Naive thymus-derived CD4-positive, alpha-beta T cell (primary cell): ENCODE measurements at regions of chr18 and their contacts with region 1.

Region 1: DNA sequence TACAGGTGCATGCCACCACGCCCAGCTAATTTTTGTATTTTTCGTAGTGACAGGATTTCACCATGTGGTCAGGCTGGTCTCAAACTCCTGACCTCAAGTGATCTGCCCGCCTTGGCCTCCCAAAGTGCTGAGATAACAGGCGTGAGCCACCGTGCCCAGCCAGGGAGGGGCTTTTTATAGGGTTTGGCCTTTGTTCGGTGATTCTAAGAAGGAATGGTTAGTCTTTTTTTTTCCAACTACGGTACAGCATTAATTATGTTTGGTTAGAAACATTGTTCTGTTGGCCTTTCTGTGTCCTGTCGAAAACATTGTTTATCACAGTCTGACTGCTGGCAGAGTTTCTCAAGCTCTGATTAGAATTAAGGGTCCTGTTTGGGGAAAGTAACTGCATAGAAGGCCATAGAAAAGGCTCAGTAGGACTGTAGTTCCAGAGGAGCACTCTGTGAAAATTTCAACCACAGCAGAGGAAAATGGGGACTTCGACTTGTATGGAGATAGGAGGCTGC is 19.3 kb upstream of the SMCHD1 start:
- DNase-seq: no peak
- ATAC-seq: peak; percentile 47
- H3K4me3 ChIP-seq: peak overlapping the region; percentile 46
- H3K4me3 Mint-ChIP-seq: peak overlapping the region in 9 of 10 donors; percentile 68 to 93 (median 86)
- H3K27ac ChIP-seq: peak overlapping the region; percentile 83
- H3K27ac Mint-ChIP-seq: peak overlapping the region in 6 of 9 donors; percentile 98 to 100 (median 100)
- H3K4me1 ChIP-seq: peaks cover 65 to 74% of the 10 kb centered on the region in 2 donors
- H3K4me1 Mint-ChIP-seq: peaks cover 0 to 100% (median 79%) of the 10 kb centered on the region in 7 donors
- H3K27me3 ChIP-seq: no peaks in the 10 kb centered on the region
- H3K27me3 Mint-ChIP-seq: no peaks in the 10 kb centered on the region

Region 2: DNA sequence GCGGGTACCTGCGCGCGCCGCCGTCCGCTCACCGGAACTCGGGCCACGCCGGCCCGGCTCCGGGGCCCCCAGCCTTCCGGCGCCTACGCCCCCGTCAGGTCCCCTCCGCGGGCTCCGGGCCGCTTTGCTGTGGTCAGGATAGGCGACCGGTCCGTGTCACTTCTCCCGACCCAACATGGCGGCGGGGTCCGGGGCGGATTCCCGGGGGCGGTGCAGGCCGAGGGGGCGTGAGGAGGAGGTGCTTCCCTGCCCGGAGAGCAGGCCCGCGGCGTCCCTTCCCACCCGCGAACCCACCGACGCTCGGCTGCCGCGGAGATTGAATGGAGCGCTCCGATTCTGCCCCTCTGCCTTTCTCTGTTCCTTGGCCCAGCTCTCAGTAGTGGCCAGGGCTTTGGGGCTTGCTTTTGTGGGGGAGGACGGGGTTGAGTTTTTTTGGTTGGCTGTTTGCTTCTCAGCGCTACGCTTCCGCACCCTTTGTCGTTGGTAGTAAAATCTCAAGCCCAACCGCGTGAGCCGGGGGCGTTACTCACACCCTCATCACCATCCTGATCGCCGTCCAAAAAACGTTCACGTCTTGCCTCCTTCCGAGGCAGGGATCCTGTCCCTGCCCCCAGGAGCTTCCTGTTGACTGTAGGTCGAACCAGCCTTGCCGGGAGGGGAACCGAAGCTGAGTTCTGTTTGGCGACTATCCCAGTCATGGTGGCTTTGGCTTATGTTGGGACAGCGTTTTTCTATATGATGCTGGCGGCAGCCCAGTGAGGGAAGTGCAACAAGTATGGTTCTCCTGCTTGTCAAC is 1823.6 kb before region 1 on chr18:
- CTCF ChIA-PET with region 1: no interaction called
- POLR2A ChIA-PET with region 1: interaction called, 3 read pairs
- intact Hi-C with region 1: loop called (anchors 1 to 10 kb)
- DNase-seq: peak; percentile 70 to 86 (median 84)
- ATAC-seq: peak; percentile 81
- H3K4me3 ChIP-seq: peak overlapping the region; percentile 60
- H3K4me3 Mint-ChIP-seq: peak overlapping the region; percentile 90 to 98 (median 95)
- H3K27ac ChIP-seq: peak overlapping the region; percentile 94
- H3K27ac Mint-ChIP-seq: peak overlapping the region; percentile 94 to 100 (median 98)
- H3K4me1 ChIP-seq: peaks cover 31 to 36% of the 10 kb centered on the region in 2 donors
- H3K4me1 Mint-ChIP-seq: peaks cover 36 to 78% (median 71%) of the 10 kb centered on the region in 7 donors
- H3K27me3 ChIP-seq: no peaks in the 10 kb centered on the region
- H3K27me3 Mint-ChIP-seq: peaks cover 0 to 6% (median 0%) of the 10 kb centered on the region in 5 donors

Region 3: DNA sequence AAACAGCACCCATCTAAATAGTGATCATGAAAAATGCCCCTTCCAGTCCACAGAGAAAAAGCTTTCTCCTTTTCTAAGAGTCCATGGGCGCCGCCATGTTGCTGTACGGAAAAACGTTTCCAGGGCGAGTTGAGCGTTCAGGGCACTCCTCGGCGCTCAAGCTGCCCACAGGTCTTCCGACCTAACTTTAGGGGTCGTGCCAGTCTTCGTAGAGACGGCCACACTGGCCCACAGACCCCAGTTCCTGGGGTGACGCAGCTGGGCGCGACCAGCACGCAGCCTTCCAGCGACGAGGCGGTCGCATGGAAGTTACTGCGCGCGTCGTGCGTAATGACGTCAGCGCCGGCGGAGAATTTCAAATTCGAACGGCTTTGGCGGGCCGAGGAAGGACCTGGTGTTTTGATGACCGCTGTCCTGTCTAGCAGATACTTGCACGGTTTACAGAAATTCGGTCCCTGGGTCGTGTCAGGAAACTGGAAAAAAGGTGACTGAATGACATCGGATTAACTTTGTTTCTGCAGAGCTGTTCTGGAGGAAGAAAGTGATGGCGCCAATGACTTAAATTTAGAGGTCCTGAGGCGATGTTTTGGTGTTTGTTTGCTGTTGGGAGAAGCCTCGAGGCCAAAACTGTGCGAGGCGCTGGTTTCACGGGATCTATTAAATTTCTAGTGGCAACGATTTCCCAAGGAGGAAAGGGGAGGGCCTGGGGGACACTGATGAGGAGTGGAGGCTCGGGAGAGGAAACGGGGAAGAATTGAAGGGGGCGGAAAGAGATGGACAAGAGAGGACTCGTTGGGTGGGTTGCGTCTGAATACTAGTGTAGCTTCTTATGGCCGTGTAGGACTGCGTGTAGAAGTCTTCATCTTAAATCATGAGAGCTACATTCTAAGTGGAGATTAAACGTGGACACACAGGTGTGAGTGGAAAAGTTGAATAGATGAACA is 64.7 kb before region 1 on chr18 and contains the starts of genes METTL4 and NDC80:
- CTCF ChIA-PET with region 1: interaction called, 3 read pairs
- POLR2A ChIA-PET with region 1: interaction called, 58 read pairs
- intact Hi-C with region 1: loop called (anchors 1 kb)
- DNase-seq: peak; percentile 70 to 90 (median 82)
- ATAC-seq: peak; percentile 87
- H3K4me3 ChIP-seq: peak within 1 kb of the TSS; percentile 88
- H3K4me3 Mint-ChIP-seq: peak within 1 kb of the TSS; percentile 96 to 100 (median 99)
- H3K27ac ChIP-seq: peak within 1 kb of the TSS; percentile 97
- H3K27ac Mint-ChIP-seq: peak within 1 kb of the TSS; percentile 98 to 100 (median 100)
- H3K4me1 ChIP-seq: peaks cover 10 to 13% of the 10 kb centered on the region in 2 donors
- H3K4me1 Mint-ChIP-seq: peaks cover 38 to 63% (median 59%) of the 10 kb centered on the region in 7 donors
- H3K27me3 ChIP-seq: no peaks in the 10 kb centered on the region
- H3K27me3 Mint-ChIP-seq: no peaks in the 10 kb centered on the region
- total RNA-seq, gene METTL4: 13.8 to 32.5 (median 22.8) TPM
- total RNA-seq, gene NDC80: 2.4 to 53.6 (median 2.7) TPM

Region 4: GRCh38 chr18:2597639-2598038 is 38.5 kb before region 1 on chr18:
- CTCF ChIA-PET with region 1: interaction called, 6 read pairs
- POLR2A ChIA-PET with region 1: interaction called, 261 read pairs
- intact Hi-C with region 1: no loop called
- DNase-seq: peak in 6 of 9 donors; percentile 33 to 59 (median 56)
- ATAC-seq: peak; percentile 69
- H3K4me3 ChIP-seq: no peak overlapping the region
- H3K4me3 Mint-ChIP-seq: peak overlapping the region in 9 of 10 donors; percentile 0 to 50 (median 25)
- H3K27ac ChIP-seq: no peak overlapping the region
- H3K27ac Mint-ChIP-seq: peak overlapping the region; percentile 36 to 83 (median 57)
- H3K4me1 ChIP-seq: peaks cover 5 to 36% of the 10 kb centered on the region in 2 donors
- H3K4me1 Mint-ChIP-seq: peaks cover 20 to 69% (median 59%) of the 10 kb centered on the region in 7 donors
- H3K27me3 ChIP-seq: no peaks in the 10 kb centered on the region
- H3K27me3 Mint-ChIP-seq: no peaks in the 10 kb centered on the region

Region 5: GRCh38 chr18:2618009-2618408 is 18.2 kb before region 1 on chr18:
- CTCF ChIA-PET with region 1: no interaction called
- POLR2A ChIA-PET with region 1: interaction called, 261 read pairs
- intact Hi-C with region 1: loop called in 1 of 2 experiments (anchors 2 kb)
- DNase-seq: no peak
- ATAC-seq: no peak
- H3K4me3 ChIP-seq: no peak overlapping the region
- H3K4me3 Mint-ChIP-seq: no peak overlapping the region
- H3K27ac ChIP-seq: no peak overlapping the region
- H3K27ac Mint-ChIP-seq: no peak overlapping the region
- H3K4me1 ChIP-seq: no peaks in the 10 kb centered on the region
- H3K4me1 Mint-ChIP-seq: peaks cover 0 to 18% (median 9%) of the 10 kb centered on the region in 7 donors
- H3K27me3 ChIP-seq: no peaks in the 10 kb centered on the region
- H3K27me3 Mint-ChIP-seq: peaks cover 0 to 2% (median 0%) of the 10 kb centered on the region in 5 donors

Region 6: GRCh38 chr18:2672410-2672809 is 36.2 kb after region 1 on chr18:
- CTCF ChIA-PET with region 1: interaction called, 4 read pairs
- POLR2A ChIA-PET with region 1: interaction called, 11 read pairs
- intact Hi-C with region 1: no loop called
- DNase-seq: no peak
- ATAC-seq: no peak
- H3K4me3 ChIP-seq: no peak overlapping the region
- H3K4me3 Mint-ChIP-seq: peak overlapping the region in 2 of 10 donors; percentile 37 to 41
- H3K27ac ChIP-seq: no peak overlapping the region
- H3K27ac Mint-ChIP-seq: peak overlapping the region in 3 of 9 donors; percentile 17 to 85 (median 71)
- H3K4me1 ChIP-seq: peaks cover 0 to 10% of the 10 kb centered on the region in 2 donors
- H3K4me1 Mint-ChIP-seq: peaks cover 35 to 84% (median 79%) of the 10 kb centered on the region in 7 donors
- H3K27me3 ChIP-seq: no peaks in the 10 kb centered on the region
- H3K27me3 Mint-ChIP-seq: no peaks in the 10 kb centered on the region

Region 7: DNA sequence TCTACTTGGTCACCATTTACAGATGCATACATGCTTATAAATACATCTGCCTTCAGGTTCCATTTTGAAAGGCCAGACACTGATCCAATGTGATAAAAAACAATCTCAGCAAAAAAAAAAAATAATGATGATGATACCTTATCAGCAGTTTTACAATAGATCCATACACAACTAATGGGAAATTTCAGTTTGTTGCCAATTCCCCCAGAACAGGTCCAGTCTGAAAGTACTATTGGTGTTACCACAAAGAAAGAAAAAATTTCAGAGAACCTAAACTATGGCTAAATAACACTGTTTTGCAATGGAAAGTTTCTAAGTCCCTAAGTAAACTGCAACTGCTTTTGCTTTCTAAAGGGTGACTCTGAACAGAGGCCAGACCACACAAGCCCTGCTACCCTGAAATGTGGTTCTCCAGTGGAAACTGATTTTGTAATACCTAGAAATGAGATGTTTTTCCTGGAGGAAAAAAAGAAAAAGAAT is 322.7 kb after region 1 on chr18:
- CTCF ChIA-PET with region 1: no interaction called
- POLR2A ChIA-PET with region 1: no interaction called
- intact Hi-C with region 1: loop called in 1 of 2 experiments (anchors 2 kb)
- DNase-seq: peak in 1 of 9 donors; percentile 61
- ATAC-seq: no peak
- H3K4me3 ChIP-seq: peak overlapping the region; percentile 8
- H3K4me3 Mint-ChIP-seq: peak overlapping the region; percentile 1 to 85 (median 66)
- H3K27ac ChIP-seq: peak overlapping the region; percentile 68
- H3K27ac Mint-ChIP-seq: peak overlapping the region; percentile 96 to 100 (median 99)
- H3K4me1 ChIP-seq: peaks cover 83 to 85% of the 10 kb centered on the region in 2 donors
- H3K4me1 Mint-ChIP-seq: peaks cover 46 to 97% (median 93%) of the 10 kb centered on the region in 7 donors
- H3K27me3 ChIP-seq: no peaks in the 10 kb centered on the region
- H3K27me3 Mint-ChIP-seq: no peaks in the 10 kb centered on the region